GM10248 (cell line): ENCODE measurements at regions of chr7 and their contacts with region 1.

Region 1: GRCh38 chr7:100449190-100449795 is 13.0 kb upstream of the PPP1R35 start:
- DNase-seq: no peak
- CTCF ChIP-seq: no peak

Region 2: GRCh38 chr7:100034871-100035510 is 414.3 kb before region 1 on chr7:
- CTCF ChIA-PET with region 1: no interaction called
- POLR2A ChIA-PET with region 1: no interaction called
- DNase-seq: no peak
- CTCF ChIP-seq: no peak

Region 3: DNA sequence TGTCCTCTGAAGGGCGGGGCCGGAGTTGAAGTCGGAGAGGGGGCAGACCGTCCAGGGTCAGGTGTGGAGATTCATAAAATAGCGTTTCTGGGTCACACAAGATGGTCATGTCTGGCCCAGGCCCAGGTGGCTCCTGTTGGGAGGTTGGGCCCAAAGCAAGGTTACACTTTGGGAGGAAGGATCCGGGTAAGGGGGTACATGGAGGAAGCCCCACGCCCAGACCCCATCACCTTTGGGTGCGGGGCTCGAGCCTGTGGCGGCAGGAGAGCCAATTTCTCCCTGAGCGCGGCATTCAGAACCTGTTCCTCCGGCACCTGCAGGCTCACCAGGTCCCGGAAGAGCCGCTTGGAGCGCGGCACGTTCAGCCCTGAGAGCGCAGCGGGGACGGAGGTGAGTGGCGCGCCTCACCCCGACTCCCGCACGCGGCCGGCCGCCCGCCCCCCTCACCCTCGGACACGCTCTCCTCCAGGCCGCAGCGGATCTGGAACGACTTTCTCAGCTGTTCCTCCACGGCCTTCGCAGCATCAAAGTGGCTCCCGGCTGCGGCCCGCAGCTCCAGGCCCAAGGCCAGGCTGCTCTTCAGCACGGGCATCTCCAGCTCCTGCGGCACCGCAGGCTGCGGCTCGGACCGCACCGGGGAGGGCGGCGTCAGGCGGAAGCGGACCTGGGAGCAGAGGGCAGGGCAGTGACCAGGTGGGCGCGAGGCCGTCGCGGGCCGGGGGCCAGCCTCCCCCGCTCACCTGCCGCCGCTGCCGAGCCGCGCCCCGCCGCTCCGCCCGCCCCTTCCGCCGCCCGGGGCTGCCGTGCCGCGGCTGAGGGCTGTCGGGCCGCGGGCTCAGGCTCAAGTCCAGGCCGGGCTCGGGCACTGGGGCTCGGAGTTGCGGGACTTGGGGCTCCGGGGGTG is 13.6 kb before region 1 on chr7:
- CTCF ChIA-PET with region 1: interaction called, 28 read pairs
- POLR2A ChIA-PET with region 1: interaction called, 7 read pairs
- DNase-seq: peak; percentile 46
- CTCF ChIP-seq: no peak